Activated CD4-positive, alpha-beta memory T cell treated with anti-CD3 and anti-CD28 coated beads for 36 hours (primary cell): ENCODE measurements at regions of chr6 and their contacts with region 1.

Region 1: DNA sequence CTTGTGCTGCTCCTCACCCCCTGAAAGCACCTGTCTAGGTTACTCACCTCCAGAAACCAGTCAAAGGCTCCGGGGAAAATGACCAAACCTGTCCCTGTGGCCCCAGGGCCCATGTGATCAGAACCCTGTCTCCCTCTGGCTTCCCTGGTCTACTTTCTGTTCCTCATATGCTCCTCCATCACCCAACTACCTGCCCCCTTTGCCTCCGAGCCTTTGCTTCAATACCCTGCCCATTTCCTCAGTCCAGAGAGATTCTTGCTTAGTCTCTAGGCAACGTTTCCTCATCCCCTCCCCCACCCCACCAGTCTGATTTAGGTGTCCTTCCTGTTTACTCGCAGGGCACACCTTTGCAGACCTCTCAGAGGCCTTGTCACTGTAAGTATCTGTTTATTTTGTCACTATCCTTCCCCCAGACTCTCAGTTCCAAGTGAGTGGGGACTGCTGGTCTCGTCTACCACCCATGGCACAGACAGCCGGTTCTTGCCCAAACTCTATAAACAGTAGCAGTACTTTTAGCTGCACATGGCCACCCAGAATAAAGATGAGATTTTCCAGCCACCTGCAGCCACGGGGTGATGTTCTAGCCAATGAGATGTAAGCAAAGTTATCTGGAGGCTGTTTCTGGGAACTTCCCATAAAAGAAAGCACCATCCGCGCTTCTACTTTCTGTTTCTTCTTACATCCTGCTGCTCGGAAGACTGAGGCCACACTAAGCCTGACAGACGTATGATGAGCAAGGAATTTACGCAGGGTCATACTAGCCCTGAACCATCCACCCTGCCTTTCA is 13.3 kb downstream of the ELOVL5 start:
- DNase-seq: peak; percentile 85
- H3K4me3 Mint-ChIP-seq: peak overlapping the region; percentile 78
- H3K27ac Mint-ChIP-seq: peak overlapping the region; percentile 99
- H3K4me1 Mint-ChIP-seq: peaks cover 90% of the 10 kb centered on the region
- H3K27me3 Mint-ChIP-seq: no peaks in the 10 kb centered on the region

Region 2: DNA sequence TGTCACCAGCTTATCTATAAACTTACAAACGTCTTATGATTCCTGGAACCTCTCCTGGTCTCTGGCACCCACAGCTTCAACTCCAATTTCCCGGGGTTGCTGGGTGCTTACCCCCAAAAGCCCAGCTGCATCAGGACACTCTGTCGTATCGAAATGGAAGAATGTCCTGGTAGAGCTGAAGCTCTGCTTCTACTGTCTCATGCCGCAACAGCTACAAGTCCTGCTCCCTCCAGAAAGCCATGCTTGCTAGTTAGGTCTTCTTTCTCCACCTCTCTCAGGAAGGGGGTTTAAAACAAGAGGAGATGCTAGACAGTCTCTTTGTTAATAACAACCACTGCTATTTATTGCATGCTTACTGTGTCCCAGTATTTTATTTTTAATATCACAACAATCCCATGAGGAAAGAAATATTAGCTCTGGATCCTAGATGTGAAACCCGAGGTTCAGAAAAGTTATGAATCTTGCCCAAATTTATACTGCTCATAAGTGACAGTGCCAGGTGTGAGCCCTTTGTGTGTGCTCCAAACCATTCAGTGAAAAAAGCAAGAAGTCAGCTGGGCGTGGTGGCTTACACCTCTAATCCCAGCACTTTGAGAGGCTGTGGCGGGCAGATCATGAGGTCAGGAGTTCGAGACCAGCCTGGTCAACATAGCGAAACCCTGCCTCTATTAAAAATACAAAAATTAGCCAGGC is 104.5 kb before region 1 on chr6:
- CTCF ChIA-PET with region 1: no interaction called
- POLR2A ChIA-PET with region 1: no interaction called
- intact Hi-C with region 1: loop called (anchors 1 kb)
- DNase-seq: no peak
- H3K4me3 Mint-ChIP-seq: no peak overlapping the region
- H3K27ac Mint-ChIP-seq: no peak overlapping the region
- H3K4me1 Mint-ChIP-seq: peaks cover 32% of the 10 kb centered on the region
- H3K27me3 Mint-ChIP-seq: no peaks in the 10 kb centered on the region

Region 3: GRCh38 chr6:53302678-53303360 is 32.6 kb before region 1 on chr6:
- CTCF ChIA-PET with region 1: interaction called, 3 read pairs
- POLR2A ChIA-PET with region 1: interaction called, 7 read pairs
- intact Hi-C with region 1: loop called (anchors 1 kb)
- DNase-seq: no peak
- H3K4me3 Mint-ChIP-seq: peak overlapping the region; percentile 63
- H3K27ac Mint-ChIP-seq: peak overlapping the region; percentile 90
- H3K4me1 Mint-ChIP-seq: peaks cover 82% of the 10 kb centered on the region
- H3K27me3 Mint-ChIP-seq: no peaks in the 10 kb centered on the region

Region 4: GRCh38 chr6:53322188-53323029 is 13.0 kb before region 1 on chr6:
- CTCF ChIA-PET with region 1: no interaction called
- POLR2A ChIA-PET with region 1: no interaction called
- intact Hi-C with region 1: loop called (anchors 1 kb)
- DNase-seq: no peak
- H3K4me3 Mint-ChIP-seq: no peak overlapping the region
- H3K27ac Mint-ChIP-seq: peak overlapping the region; percentile 60
- H3K4me1 Mint-ChIP-seq: peaks cover 65% of the 10 kb centered on the region
- H3K27me3 Mint-ChIP-seq: no peaks in the 10 kb centered on the region

Region 5: GRCh38 chr6:53359072-53359842 is 23.9 kb after region 1 on chr6:
- CTCF ChIA-PET with region 1: interaction called, 4 read pairs
- POLR2A ChIA-PET with region 1: interaction called, 3 read pairs
- intact Hi-C with region 1: loop called (anchors 1 kb)
- DNase-seq: peak; percentile 95
- H3K4me3 Mint-ChIP-seq: peak overlapping the region; percentile 92
- H3K27ac Mint-ChIP-seq: peak overlapping the region; percentile 98
- H3K4me1 Mint-ChIP-seq: peaks cover 39% of the 10 kb centered on the region
- H3K27me3 Mint-ChIP-seq: no peaks in the 10 kb centered on the region